PC-3 (cell line): ENCODE measurements at regions of chr11 and their contacts with region 1.

Region 1: GRCh38 chr11:13970986-13971385 is 8.5 kb downstream of the SPON1 start:
- DNase-seq: peak; percentile 68
- ATAC-seq: peak; percentile 98
- H3K4me3 ChIP-seq: no peak overlapping the region
- H3K27ac ChIP-seq: no peak overlapping the region
- H3K4me1 ChIP-seq: no peaks in the 10 kb centered on the region; the same call in 1 of the 2 replicates
- H3K27me3 ChIP-seq: no peaks in the 10 kb centered on the region
- CTCF ChIP-seq: peak; percentile 89

Region 2: GRCh38 chr11:13620063-13620462 is 350.9 kb before region 1 on chr11:
- CTCF ChIA-PET with region 1: no interaction called
- POLR2A ChIA-PET with region 1: no interaction called
- intact Hi-C with region 1: no loop called
- DNase-seq: no peak
- ATAC-seq: no peak
- H3K4me3 ChIP-seq: no peak overlapping the region
- H3K27ac ChIP-seq: no peak overlapping the region
- H3K4me1 ChIP-seq: no peaks in the 10 kb centered on the region
- H3K27me3 ChIP-seq: no peaks in the 10 kb centered on the region; the same call in 1 of the 2 replicates
- CTCF ChIP-seq: no peak

Region 3: DNA sequence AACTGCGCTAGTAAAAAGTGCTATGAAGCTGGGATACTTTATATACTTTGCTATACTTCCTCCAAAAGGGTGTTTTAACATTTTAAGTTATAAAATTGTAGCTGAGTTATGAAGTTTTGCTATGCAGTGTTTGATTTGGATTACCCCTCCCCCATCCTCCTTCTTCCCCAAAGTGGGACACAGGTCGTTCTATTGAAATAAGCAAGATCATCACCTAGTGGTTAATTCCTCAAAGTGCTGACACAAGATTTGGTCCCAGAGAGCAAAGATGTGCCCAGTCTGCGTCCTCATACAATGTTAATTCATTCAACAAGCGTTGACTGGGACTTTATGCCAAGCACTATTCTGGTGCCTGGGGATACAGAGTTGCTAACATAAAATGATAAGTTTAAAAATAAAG is 70.1 kb after region 1 on chr11:
- CTCF ChIA-PET with region 1: no interaction called
- POLR2A ChIA-PET with region 1: no interaction called
- intact Hi-C with region 1: loop called (anchors 1 kb)
- DNase-seq: peak; percentile 46
- ATAC-seq: peak; percentile 58; the same call in 1 of the 2 replicates
- H3K4me3 ChIP-seq: no peak overlapping the region
- H3K27ac ChIP-seq: no peak overlapping the region
- H3K4me1 ChIP-seq: peaks cover 9% of the 10 kb centered on the region; the same call in 1 of the 2 replicates
- H3K27me3 ChIP-seq: peaks cover 6% of the 10 kb centered on the region; the same call in 1 of the 2 replicates
- CTCF ChIP-seq: peak; percentile 70